Panc1 (cell line): ENCODE measurements at regions of chr15 and their contacts with region 1.

Region 1: DNA sequence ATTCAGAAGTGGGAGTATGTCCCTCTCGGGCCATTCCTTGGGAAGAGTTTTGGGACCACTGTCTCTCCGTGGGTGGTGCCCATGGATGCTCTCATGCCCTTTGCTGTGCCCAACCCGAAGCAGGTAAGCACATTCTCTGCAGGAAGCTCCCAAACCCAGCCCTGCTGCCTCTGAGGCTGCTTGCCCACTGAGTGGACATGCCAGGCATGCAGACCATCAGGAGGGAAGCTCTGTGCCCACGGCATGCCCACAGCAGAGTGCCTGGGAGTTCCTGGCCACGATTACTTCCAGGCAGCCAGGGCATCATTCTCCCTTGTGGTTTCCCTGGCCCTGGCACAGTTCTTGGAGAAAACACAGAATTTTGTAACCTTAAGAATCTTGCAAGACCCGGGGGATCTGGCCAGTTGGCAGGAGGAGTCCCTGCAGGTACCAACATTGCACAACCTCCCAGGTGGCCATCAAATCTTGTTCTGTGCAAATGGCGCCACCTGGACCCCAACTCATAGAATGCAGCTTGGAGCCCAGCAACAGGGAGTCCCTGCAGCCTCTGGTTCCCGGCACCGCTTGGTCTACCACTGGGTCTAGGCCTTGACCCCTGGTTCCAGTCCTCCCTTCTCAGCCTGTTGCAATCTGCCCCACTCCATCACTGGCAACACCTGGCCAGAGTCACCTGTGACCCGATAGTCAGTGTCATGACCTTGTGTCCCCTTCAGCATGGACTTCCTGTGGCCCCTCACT is 20.4 kb downstream of the FAH start:
- DNase-seq: no peak
- ATAC-seq: peak; percentile 89
- H3K4me3 ChIP-seq: no peak overlapping the region
- H3K27ac ChIP-seq: no peak overlapping the region
- H3K4me1 ChIP-seq: peaks cover 6% of the 10 kb centered on the region
- H3K27me3 ChIP-seq: no peaks in the 10 kb centered on the region
- CTCF ChIP-seq: peak; percentile 87

Region 2: DNA sequence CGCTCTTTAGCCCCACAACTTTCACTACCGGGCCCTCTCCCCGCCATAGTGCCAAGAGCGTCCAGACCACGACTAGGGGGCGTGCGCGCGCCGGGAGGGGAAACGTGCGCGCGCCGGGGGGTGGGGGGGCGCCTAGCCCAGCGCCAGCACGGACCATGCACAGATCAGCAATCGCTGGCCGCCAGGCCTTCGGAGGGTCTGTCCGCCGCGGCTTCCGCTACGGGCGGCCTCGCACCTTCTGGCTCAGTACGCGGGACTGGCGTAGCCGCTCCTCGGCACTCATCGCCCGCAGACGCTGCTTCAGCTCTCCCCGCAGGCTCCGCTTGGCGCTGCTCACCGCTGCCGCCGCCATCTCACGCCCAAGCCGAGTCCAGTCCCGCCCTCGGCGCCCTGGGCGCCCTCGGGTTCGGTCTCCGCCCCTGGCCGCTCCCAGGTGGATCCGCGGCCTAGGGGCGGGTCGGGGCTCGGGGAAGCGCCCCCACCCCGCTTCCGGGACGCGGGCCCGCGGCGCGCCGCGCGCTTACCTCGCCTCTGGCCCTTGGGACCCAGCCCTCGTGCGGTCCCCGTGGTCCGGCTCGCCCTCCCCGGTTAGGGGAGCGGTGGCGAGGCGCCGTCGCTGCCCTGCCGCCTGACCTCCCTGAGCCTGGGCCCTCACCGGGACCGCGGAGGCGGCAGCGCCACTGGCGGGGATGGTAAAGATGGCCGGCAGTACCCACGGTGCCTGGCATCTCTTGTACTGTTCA is 276.4 kb before region 1 on chr15 and contains the start of gene MTHFS:
- CTCF ChIA-PET with region 1: no interaction called
- POLR2A ChIA-PET with region 1: no interaction called
- in situ Hi-C with region 1: no loop called
- intact Hi-C with region 1: loop called (anchors 5 kb)
- DNase-seq: no peak
- ATAC-seq: peak; percentile 99
- H3K4me3 ChIP-seq: peak within 1 kb of the TSS; percentile 70 to 82
- H3K27ac ChIP-seq: peak within 1 kb of the TSS; percentile 89
- H3K4me1 ChIP-seq: peaks cover 31% of the 10 kb centered on the region
- H3K27me3 ChIP-seq: no peaks in the 10 kb centered on the region
- CTCF ChIP-seq: peak; percentile 77
- total RNA-seq, gene MTHFS: 50.0 TPM

Region 3: DNA sequence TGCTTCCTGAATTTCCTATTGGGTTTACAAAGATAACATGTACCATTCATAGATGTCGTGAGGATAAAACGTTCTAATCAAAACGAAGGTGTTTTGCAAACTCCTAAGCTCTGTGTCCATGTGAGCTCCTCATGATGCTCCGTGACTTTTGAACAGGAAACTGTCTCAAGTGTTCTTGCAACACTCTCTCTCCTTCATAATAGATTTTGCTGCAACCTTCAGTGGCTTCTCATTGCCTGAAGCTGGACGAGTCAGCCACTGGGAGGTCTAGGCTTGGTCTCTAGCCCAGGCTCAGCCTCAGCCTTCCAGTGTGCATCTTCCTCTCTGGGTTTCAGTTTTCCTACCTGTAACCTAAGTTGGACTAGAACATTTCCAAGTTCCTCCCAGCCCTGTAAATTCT is 183.5 kb before region 1 on chr15:
- CTCF ChIA-PET with region 1: interaction called, 3 read pairs
- POLR2A ChIA-PET with region 1: no interaction called
- in situ Hi-C with region 1: no loop called
- intact Hi-C with region 1: loop called (anchors 10 kb)
- DNase-seq: no peak
- ATAC-seq: no peak
- H3K4me3 ChIP-seq: no peak overlapping the region
- H3K27ac ChIP-seq: no peak overlapping the region
- H3K4me1 ChIP-seq: no peaks in the 10 kb centered on the region
- H3K27me3 ChIP-seq: no peaks in the 10 kb centered on the region
- CTCF ChIP-seq: no peak

Region 4: DNA sequence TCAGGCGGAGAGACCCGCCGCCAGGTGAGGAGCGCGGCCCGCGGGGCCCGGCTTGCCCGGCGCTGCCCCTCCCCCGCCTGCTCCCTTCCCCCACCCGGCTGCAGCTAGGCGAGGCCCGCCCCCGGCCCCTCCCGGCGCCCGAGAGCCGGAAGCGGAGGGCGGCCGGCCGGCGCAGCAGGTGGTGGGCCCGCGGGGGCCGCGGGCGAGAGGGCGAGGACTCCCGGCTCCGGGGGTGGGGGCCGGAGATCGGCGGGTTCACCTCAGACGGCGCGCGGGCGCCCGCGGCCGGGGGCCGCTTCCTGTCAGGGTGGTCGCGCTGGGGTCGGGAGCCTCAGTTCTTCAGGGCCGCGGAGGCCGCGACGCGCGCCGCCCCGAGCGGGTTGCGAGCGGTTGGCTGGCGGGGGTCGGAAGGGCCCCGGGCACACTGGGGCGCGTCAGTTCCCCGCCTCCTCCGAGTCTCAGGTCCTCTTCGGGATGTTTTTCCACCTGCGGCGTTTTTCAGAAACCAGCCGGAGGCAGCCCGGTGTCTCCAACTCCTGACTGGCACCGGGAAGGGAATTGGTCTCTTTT is 113.3 kb before region 1 on chr15:
- CTCF ChIA-PET with region 1: no interaction called
- POLR2A ChIA-PET with region 1: no interaction called
- in situ Hi-C with region 1: no loop called
- intact Hi-C with region 1: loop called (anchors 5 kb)
- DNase-seq: no peak
- ATAC-seq: peak; percentile 88
- H3K4me3 ChIP-seq: peak overlapping the region; percentile 77 to 78
- H3K27ac ChIP-seq: peak overlapping the region; percentile 98
- H3K4me1 ChIP-seq: peaks cover 25% of the 10 kb centered on the region
- H3K27me3 ChIP-seq: no peaks in the 10 kb centered on the region
- CTCF ChIP-seq: no peak

Region 5: DNA sequence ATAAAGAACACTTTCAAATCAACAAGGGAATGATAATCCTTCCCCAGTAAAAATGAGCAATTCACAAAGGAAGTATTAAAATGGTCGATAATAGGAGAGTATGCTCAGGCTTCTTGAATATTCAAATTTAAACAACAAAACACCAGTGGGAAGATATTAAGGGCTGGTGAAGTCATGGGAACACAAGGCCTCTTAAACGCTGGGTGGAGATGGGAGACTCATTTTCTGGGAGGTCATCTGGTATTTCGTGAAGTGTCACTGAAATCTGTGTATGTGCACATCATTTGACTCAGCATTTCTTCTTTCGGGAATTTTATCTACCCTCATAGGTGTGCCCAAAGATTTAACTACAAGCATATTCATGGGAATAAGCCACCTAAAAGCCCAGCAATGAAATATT is 118.9 kb after region 1 on chr15:
- CTCF ChIA-PET with region 1: no interaction called
- POLR2A ChIA-PET with region 1: no interaction called
- in situ Hi-C with region 1: no loop called
- intact Hi-C with region 1: no loop called
- DNase-seq: no peak
- ATAC-seq: no peak
- H3K4me3 ChIP-seq: no peak overlapping the region
- H3K27ac ChIP-seq: no peak overlapping the region
- H3K4me1 ChIP-seq: no peaks in the 10 kb centered on the region
- H3K27me3 ChIP-seq: peaks cover 2% of the 10 kb centered on the region; the same call in 1 of the 2 replicates
- CTCF ChIP-seq: no peak

Region 6: DNA sequence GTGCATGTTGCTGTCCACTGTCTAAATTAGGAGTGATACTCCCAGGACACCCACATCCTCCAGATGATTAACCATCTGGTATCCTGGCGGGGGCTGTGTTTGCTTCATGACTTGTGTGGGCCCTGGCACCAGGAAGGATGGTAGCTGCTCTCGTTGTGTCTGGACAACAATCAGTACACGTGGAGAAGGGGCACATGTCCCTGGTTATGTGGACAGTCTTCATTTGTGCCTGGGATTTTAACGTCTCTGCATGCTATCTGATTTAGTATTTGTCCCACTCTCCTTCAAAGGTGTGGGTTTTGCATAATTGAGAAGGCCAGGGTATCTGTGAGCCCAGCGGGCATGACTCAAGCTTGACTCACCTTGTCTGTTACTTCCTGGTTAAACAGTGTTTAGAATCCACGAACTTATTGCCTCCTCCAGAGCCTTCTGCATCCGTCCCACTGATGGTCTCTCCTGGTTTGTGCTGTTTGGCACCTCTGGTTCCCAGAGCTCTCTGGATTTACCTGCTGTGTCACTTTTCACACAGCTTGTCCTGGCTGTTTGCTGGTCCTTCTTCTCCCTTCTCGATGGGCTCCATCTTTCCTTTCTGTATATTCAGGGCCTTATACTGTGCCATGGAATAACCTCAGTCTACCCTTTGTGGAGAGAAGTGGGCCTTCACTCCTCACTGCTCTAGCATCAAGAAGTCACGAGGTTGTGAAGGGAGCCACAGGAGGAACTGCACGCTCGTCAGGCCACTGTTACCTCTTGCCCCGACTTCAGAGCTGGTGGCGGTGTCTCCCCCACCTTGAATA is 263.5 kb after region 1 on chr15:
- CTCF ChIA-PET with region 1: no interaction called
- POLR2A ChIA-PET with region 1: no interaction called
- in situ Hi-C with region 1: no loop called
- intact Hi-C with region 1: no loop called
- DNase-seq: peak; percentile 42
- ATAC-seq: peak; percentile 92
- H3K4me3 ChIP-seq: no peak overlapping the region
- H3K27ac ChIP-seq: peak overlapping the region; percentile 34; the same call in 1 of the 2 replicates
- H3K4me1 ChIP-seq: peaks cover 14% of the 10 kb centered on the region; the same call in 1 of the 2 replicates
- H3K27me3 ChIP-seq: no peaks in the 10 kb centered on the region
- CTCF ChIP-seq: no peak